ENCODE measurements at regions of chr3 and their contacts with region 1.

Region 1: GRCh38 chr3:197736491-197737318 is at the start of gene RUBCN:
- DNase-seq: peak; percentile 92 to 93 (median 92)
- H3K4me3 ChIP-seq: peak within 1 kb of the TSS; percentile 76 to 94 (median 83)
- H3K4me3 Mint-ChIP-seq: peak within 1 kb of the TSS; percentile 94 to 99
- H3K27ac ChIP-seq: peak within 1 kb of the TSS; percentile 79 to 82
- H3K27ac Mint-ChIP-seq: peak within 1 kb of the TSS; percentile 89 to 96 (median 91)
- H3K4me1 ChIP-seq: peaks cover 28 to 33% of the 10 kb centered on the region in 2 donors
- H3K4me1 Mint-ChIP-seq: peaks cover 32% of the 10 kb centered on the region
- H3K27me3 ChIP-seq: no peaks in the 10 kb centered on the region
- H3K27me3 Mint-ChIP-seq: peaks cover 2 to 6% (median 2%) of the 10 kb centered on the region in 3 donors
- CTCF ChIP-seq: no peak
- polyA plus RNA-seq, gene RUBCN: 8.6 to 37.9 (median 13.5) TPM

Region 2: DNA sequence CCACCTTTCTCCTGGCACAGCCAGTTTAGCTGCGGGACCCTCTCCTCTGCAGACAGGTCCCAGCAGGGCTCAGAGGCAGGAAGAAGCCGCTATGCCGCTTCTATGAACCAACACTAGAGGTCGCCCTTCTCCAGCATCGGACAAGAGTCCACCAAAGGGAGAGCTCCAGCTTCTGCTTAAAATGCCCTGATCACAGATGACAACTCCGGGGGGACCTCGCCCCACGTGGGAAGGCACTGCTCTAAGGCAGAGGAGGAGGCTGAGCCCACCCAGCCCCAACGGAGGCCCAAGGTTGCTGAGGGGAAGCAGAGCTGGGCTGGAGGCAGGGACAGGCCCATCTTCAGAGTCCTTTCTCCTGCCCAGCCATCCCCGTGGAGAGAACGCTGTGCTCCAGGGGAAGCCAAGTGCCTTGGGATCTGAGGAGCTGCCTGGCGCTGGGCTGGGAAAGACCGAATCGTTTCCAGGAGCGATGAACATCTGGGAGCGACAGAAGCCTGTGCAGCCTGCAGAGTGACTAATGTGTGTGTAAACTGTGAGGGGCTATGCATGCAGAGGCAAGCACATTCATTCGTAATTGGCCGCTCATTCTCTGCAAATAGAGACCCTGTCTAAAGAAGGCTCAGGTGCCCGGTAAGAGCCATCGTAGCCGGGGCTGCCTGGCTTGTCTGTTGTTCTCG is 137.5 kb before region 1 on chr3:
- intact Hi-C with region 1: no loop called
- DNase-seq: peak; percentile 57 to 72 (median 72)
- H3K4me3 ChIP-seq: no peak overlapping the region
- H3K4me3 Mint-ChIP-seq: no peak overlapping the region
- H3K27ac ChIP-seq: no peak overlapping the region
- H3K27ac Mint-ChIP-seq: no peak overlapping the region
- H3K4me1 ChIP-seq: no peaks in the 10 kb centered on the region
- H3K4me1 Mint-ChIP-seq: no peaks in the 10 kb centered on the region
- H3K27me3 ChIP-seq: no peaks in the 10 kb centered on the region
- H3K27me3 Mint-ChIP-seq: peaks cover 0 to 3% (median 2%) of the 10 kb centered on the region in 3 donors
- CTCF ChIP-seq: peak; percentile 96

Region 3: GRCh38 chr3:197720694-197721093 is 16.0 kb before region 1 on chr3:
- intact Hi-C with region 1: loop called in 1 of 2 experiments (anchors 2 kb)
- DNase-seq: peak in 1 of 3 donors; percentile 25
- H3K4me3 ChIP-seq: no peak overlapping the region
- H3K4me3 Mint-ChIP-seq: peak overlapping the region in 1 of 2 donors; percentile 57
- H3K27ac ChIP-seq: no peak overlapping the region
- H3K27ac Mint-ChIP-seq: peak overlapping the region in 2 of 7 donors; percentile 59 to 60
- H3K4me1 ChIP-seq: peaks cover 17 to 24% of the 10 kb centered on the region in 2 donors
- H3K4me1 Mint-ChIP-seq: peaks cover 28% of the 10 kb centered on the region
- H3K27me3 ChIP-seq: no peaks in the 10 kb centered on the region
- H3K27me3 Mint-ChIP-seq: no peaks in the 10 kb centered on the region
- CTCF ChIP-seq: no peak

Region 4: DNA sequence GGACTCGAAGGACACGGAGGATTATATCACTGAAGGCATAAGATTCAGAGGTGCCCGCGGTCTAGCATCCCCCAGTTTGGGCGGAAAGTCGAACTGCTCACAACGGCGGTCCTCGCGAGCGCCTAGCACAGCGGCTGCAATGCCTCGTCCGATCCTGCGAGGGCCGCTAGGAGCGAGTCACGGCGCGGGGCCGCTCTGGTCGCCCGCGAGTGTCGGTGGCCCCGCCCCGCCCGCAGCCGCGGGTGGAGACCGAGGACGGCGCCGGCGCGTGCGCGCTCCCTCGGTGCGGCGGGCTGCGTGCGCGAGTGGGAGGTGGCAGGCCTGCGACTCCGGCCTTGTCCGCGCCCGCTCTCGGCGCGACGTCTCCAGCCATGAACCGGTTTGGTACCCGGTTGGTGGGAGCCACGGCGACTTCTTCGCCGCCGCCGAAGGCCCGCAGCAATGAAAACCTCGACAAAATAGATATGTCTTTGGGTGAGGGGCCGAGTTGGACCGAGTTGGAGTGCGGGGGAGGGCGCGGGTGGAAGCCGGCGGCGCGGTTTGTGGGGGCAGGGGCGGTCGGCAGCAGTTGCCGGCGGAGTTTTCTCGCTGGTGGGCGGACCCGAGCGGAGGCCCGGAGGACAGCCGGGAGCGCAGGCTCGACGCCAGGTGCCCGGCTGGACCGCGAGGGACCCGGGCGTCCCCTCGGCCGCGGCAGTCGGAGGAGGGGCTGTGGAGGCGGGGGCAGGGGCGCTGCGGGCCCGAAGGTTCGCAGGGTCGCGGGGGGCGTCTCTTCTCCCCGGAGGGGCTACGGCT is 13.1 kb after region 1 on chr3 and contains the start of gene FYTTD1:
- intact Hi-C with region 1: loop called in 1 of 2 experiments (anchors 2 kb)
- DNase-seq: peak; percentile 80 to 88 (median 85)
- H3K4me3 ChIP-seq: peak within 1 kb of the TSS; percentile 63 to 80 (median 77)
- H3K4me3 Mint-ChIP-seq: peak within 1 kb of the TSS; percentile 94 to 97
- H3K27ac ChIP-seq: peak within 1 kb of the TSS; percentile 79
- H3K27ac Mint-ChIP-seq: peak within 1 kb of the TSS; percentile 90 to 96 (median 94)
- H3K4me1 ChIP-seq: peaks cover 48 to 53% of the 10 kb centered on the region in 2 donors
- H3K4me1 Mint-ChIP-seq: peaks cover 51% of the 10 kb centered on the region
- H3K27me3 ChIP-seq: no peaks in the 10 kb centered on the region
- H3K27me3 Mint-ChIP-seq: peaks cover 5 to 12% (median 10%) of the 10 kb centered on the region in 3 donors
- CTCF ChIP-seq: peak; percentile 45
- polyA plus RNA-seq, gene FYTTD1: 11.5 to 73.2 (median 59.4) TPM

Region 5: GRCh38 chr3:197791113-197791891 is 54.6 kb after region 1 on chr3 and contains the start of gene LRCH3:
- intact Hi-C with region 1: no loop called
- DNase-seq: peak; percentile 66 to 75 (median 67)
- H3K4me3 ChIP-seq: peak within 1 kb of the TSS; percentile 79 to 96 (median 85)
- H3K4me3 Mint-ChIP-seq: peak within 1 kb of the TSS; percentile 87 to 97
- H3K27ac ChIP-seq: peak within 1 kb of the TSS; percentile 86 to 98
- H3K27ac Mint-ChIP-seq: peak within 1 kb of the TSS; percentile 96 to 99 (median 97)
- H3K4me1 ChIP-seq: peaks cover 8 to 25% of the 10 kb centered on the region in 2 donors
- H3K4me1 Mint-ChIP-seq: peaks cover 35% of the 10 kb centered on the region
- H3K27me3 ChIP-seq: no peaks in the 10 kb centered on the region
- H3K27me3 Mint-ChIP-seq: no peaks in the 10 kb centered on the region
- CTCF ChIP-seq: no peak
- polyA plus RNA-seq, gene LRCH3: 4.1 to 19.4 (median 7.4) TPM

Region 6: GRCh38 chr3:197847866-197848401 is 111.2 kb after region 1 on chr3:
- intact Hi-C with region 1: no loop called
- DNase-seq: peak; percentile 28 to 55 (median 53)
- H3K4me3 ChIP-seq: peak overlapping the region; percentile 12 to 66 (median 55)
- H3K4me3 Mint-ChIP-seq: peak overlapping the region; percentile 69 to 88
- H3K27ac ChIP-seq: peak overlapping the region; percentile 63 to 86
- H3K27ac Mint-ChIP-seq: peak overlapping the region; percentile 84 to 95 (median 90)
- H3K4me1 ChIP-seq: peaks cover 5 to 16% of the 10 kb centered on the region in 2 donors
- H3K4me1 Mint-ChIP-seq: peaks cover 20% of the 10 kb centered on the region
- H3K27me3 ChIP-seq: no peaks in the 10 kb centered on the region
- H3K27me3 Mint-ChIP-seq: no peaks in the 10 kb centered on the region
- CTCF ChIP-seq: no peak

Measured in CD14-positive monocyte (primary cell).